ENCODE measurements at regions of chr12 and their contacts with region 1.

Region 1: DNA sequence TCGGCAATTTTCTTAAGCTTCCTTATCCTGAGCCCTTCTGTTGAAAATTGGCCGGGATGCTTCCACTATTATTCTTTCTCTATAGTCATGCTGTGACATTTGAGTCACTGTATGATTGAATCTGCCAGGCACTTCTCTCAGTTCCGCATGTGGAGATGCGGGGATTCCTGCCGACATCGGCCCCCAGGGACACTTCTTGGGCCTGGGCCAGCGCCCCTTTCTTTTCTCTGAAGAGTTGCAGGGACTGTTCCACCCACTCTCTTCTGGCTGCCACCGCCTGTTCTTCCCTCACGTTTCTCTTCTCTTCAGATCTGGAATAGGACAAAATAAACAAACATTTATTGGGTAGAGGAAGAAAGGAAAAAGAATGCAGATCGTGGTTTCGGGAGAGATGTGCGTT is 310.1 kb downstream of the ETNK1 start:
- DNase-seq: no peak
- H3K4me3 Mint-ChIP-seq: no peak overlapping the region
- H3K27ac Mint-ChIP-seq: no peak overlapping the region
- H3K4me1 Mint-ChIP-seq: no peaks in the 10 kb centered on the region
- H3K27me3 Mint-ChIP-seq: no peaks in the 10 kb centered on the region

Region 2: GRCh38 chr12:22684140-22685118 is 250.7 kb before region 1 on chr12:
- CTCF ChIA-PET with region 1: no interaction called
- intact Hi-C with region 1: no loop called
- DNase-seq: no peak
- H3K4me3 Mint-ChIP-seq: no peak overlapping the region
- H3K27ac Mint-ChIP-seq: no peak overlapping the region
- H3K4me1 Mint-ChIP-seq: peaks cover 4% of the 10 kb centered on the region
- H3K27me3 Mint-ChIP-seq: no peaks in the 10 kb centered on the region

Region 3: DNA sequence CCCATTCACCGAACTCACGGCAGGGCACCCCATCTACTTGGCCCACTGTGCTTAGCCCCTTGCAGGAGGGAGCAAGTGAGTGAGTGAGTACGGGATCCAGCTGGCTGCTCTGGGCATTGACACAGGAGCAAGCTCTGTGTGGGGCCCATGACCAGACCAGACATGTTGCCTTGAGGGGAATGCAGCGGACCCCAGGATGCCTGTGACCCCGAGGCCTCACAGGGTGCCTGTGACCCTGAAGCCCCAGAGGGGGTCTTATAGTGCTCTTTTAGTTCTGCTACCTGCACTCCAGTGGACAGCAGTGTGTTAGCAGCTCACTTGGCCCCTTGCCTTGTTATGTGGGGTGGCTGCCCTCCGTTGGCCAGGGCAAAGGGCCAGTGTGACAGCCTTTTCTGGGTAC is 54.3 kb before region 1 on chr12:
- CTCF ChIA-PET with region 1: interaction called, 11 read pairs
- intact Hi-C with region 1: no loop called
- DNase-seq: no peak
- H3K4me3 Mint-ChIP-seq: no peak overlapping the region
- H3K27ac Mint-ChIP-seq: no peak overlapping the region
- H3K4me1 Mint-ChIP-seq: no peaks in the 10 kb centered on the region
- H3K27me3 Mint-ChIP-seq: no peaks in the 10 kb centered on the region